ENCODE measurements at regions of chr1 and their contacts with region 1.

Region 1: GRCh38 chr1:25675729-25676476 is 59.3 kb downstream of the MAN1C1 start:
- DNase-seq: peak; percentile 83
- H3K4me3 Mint-ChIP-seq: peak overlapping the region; percentile 47
- H3K27ac Mint-ChIP-seq: peak overlapping the region; percentile 85
- H3K4me1 Mint-ChIP-seq: peaks cover 54% of the 10 kb centered on the region
- H3K27me3 Mint-ChIP-seq: peaks cover 81% of the 10 kb centered on the region

Region 2: DNA sequence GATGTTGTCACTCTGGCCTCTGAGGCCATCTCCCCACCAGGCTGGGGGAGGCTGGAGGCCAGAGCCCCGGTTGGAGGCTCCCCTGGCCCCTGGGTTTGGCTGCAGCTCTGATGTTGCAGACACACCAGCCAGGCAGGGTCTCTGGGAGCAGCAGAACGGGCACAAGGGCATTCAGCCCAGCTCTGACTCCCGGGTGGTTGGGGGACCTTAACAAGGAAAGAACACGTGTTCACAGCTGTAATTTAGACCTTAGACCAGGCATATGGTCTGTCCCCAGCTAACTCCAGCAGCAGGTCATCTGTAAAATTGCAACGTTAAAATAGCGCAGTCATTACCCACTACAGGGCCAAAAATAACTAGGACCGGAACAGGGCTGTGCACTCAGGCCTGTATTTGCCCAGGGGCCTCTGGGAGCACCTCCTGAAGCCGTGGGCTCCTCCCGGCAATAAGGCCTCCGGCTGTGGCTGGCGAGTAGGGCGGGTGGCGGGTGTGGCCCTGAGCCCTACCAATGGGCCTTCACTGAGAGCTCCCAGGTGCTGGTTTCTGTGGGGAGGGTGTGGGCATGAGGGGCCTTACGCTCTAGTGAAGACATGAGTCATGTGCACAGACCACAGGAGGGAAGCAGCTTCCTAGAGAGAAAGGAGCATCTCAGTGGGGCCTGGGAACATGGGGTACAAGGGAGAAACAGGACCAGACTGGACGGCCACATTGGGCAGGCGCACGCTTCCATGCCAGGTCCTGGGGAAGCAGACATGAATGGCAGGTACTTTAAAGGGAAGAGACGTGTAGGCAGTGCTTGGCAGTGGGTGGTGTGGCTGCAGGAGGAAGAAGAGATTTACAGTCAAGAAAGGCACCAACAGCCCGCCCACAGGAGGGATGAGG is 126.4 kb before region 1 on chr1:
- intact Hi-C with region 1: loop called (anchors 1 kb)
- DNase-seq: peak; percentile 64
- H3K4me3 Mint-ChIP-seq: peak overlapping the region; percentile 61
- H3K27ac Mint-ChIP-seq: peak overlapping the region; percentile 80
- H3K4me1 Mint-ChIP-seq: peaks cover 39% of the 10 kb centered on the region
- H3K27me3 Mint-ChIP-seq: peaks cover 13% of the 10 kb centered on the region

Region 3: GRCh38 chr1:25642574-25643108 is 33.3 kb before region 1 on chr1:
- intact Hi-C with region 1: loop called (anchors 1 kb)
- DNase-seq: peak; percentile 71
- H3K4me3 Mint-ChIP-seq: peak overlapping the region; percentile 28
- H3K27ac Mint-ChIP-seq: peak overlapping the region; percentile 64
- H3K4me1 Mint-ChIP-seq: peaks cover 35% of the 10 kb centered on the region
- H3K27me3 Mint-ChIP-seq: peaks cover 78% of the 10 kb centered on the region

Region 4: GRCh38 chr1:25729751-25730644 is 54.1 kb after region 1 on chr1:
- intact Hi-C with region 1: loop called (anchors 1 kb)
- DNase-seq: no peak
- H3K4me3 Mint-ChIP-seq: no peak overlapping the region
- H3K27ac Mint-ChIP-seq: no peak overlapping the region
- H3K4me1 Mint-ChIP-seq: peaks cover 17% of the 10 kb centered on the region
- H3K27me3 Mint-ChIP-seq: peaks cover 48% of the 10 kb centered on the region

Region 5: DNA sequence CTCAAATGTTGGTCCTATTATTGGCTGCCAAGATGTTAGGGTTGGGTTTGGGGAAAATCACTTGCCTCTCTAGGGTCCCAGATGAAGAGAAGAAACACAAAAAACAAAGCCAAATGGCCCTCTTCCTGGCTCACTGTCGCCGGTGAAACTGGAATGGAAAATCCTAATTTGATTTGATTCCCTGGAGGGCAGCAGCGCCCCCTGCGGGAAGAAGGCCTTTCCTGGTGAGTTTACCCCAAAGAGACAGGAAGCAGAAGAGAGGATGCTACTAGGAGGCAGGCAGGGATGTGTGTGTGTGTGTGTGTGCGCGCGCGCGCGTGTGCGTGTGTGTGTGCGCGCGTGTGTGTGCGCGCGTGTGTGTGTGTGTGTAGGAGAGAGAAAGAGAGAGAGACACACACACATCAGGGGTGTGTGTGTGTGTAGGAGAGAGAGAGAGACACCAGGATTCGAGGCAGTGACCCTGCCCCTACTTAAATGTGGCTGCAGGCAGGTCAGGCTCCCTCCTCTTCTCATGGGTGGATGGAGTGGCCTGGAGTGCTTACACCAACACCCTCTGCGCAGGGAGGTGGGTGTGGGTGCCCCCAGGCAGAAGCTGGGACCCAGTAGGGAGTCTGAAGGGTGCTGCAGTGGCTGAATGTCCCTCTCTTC is 121.0 kb after region 1 on chr1:
- intact Hi-C with region 1: loop called (anchors 5 kb)
- DNase-seq: peak; percentile 65
- H3K4me3 Mint-ChIP-seq: peak overlapping the region; percentile 0
- H3K27ac Mint-ChIP-seq: peak overlapping the region; percentile 9
- H3K4me1 Mint-ChIP-seq: peaks cover 17% of the 10 kb centered on the region
- H3K27me3 Mint-ChIP-seq: peaks cover 31% of the 10 kb centered on the region

Measured in activated T-helper 1 cell treated with anti-CD3 and anti-CD28 coated beads, Interleukin-12 subunit alpha, Interleukin-12 subunit beta, Interleukin-2, Interleukin-4 antibody, amounts not matched to agents 30 ng/mL and 10 ng/mL and 1 ng/mL, durations not matched to agents 14 hours and 24 hours and 36 hours (primary cell).